ENCODE measurements at regions of chr1 and their contacts with region 1.

Region 1: DNA sequence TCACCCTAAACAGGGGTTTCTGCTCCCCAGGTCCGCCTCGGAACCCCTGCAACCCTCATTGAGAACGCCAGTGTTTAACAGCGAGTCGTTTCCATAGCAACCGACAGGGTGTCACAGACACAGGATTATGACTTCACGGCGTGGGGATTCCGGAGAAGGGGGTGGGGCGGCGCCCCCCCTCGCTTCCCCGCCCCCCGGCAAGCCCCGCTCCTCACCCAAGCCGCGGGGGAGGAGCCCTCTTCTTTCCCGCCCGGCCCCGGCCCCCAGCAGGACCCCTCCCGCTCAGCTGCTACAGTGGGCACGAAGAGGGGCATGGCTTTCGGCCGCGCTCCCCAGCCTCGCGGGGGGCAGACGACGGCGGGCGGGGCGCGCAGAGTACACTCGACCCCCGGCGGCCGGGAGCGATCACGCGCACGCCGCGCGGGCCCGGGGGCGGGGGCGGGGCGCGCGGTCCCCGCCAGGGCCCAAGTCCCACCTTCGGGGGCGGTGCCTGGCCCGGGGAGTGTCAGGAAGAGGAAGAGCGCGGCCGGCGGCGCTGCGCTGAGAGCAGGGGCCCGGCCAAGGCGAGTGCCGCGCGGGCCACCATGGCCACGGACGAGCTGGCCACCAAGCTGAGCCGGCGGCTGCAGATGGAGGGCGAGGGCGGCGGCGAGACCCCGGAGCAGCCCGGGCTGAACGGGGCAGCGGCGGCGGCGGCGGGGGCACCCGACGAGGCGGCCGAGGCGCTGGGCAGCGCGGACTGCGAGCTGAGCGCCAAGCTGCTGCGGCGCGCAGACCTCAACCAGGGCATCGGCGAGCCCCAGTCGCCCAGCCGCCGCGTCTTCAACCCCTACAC is at the start of gene EFHD2:
- DNase-seq: peak; percentile 78
- H3K4me3 ChIP-seq: peak within 1 kb of the TSS; percentile 89 to 94
- H3K27ac ChIP-seq: peak within 1 kb of the TSS; percentile 74 to 75
- H3K4me1 ChIP-seq: peaks cover 10% of the 10 kb centered on the region
- H3K27me3 ChIP-seq: no peaks in the 10 kb centered on the region
- CTCF ChIP-seq: peak in 1 of 4 experiments; percentile 29
- POLR2A ChIP-seq: peak; percentile 98
- total RNA-seq, gene EFHD2: 69.9 to 281 TPM

Region 2: GRCh38 chr1:15341634-15342407 is 67.8 kb before region 1 on chr1:
- intact Hi-C with region 1: loop called (anchors 5 kb)
- DNase-seq: peak; percentile 77
- H3K4me3 ChIP-seq: no peak overlapping the region
- H3K27ac ChIP-seq: peak overlapping the region; percentile 70 to 75
- H3K4me1 ChIP-seq: peaks cover 7% of the 10 kb centered on the region
- H3K27me3 ChIP-seq: no peaks in the 10 kb centered on the region
- CTCF ChIP-seq: no peak
- POLR2A ChIP-seq: peak; percentile 23

Measured in prostate gland (tissue), 2 donors.